CD8-positive, alpha-beta memory T cell (primary cell): ENCODE measurements at regions of chr4 and their contacts with region 1.

Region 1: GRCh38 chr4:169659716-169660670 is 39.6 kb downstream of the CLCN3 start:
- DNase-seq: peak; percentile 12 to 84 (median 70)
- H3K4me3 ChIP-seq: peak overlapping the region; percentile 5
- H3K4me3 Mint-ChIP-seq: peak overlapping the region; percentile 23 to 76 (median 54)
- H3K27ac ChIP-seq: peak overlapping the region; percentile 76
- H3K27ac Mint-ChIP-seq: peak overlapping the region; percentile 73 to 96 (median 84)
- H3K4me1 ChIP-seq: no peaks in the 10 kb centered on the region
- H3K4me1 Mint-ChIP-seq: peaks cover 24 to 50% (median 45%) of the 10 kb centered on the region in 3 donors
- H3K27me3 ChIP-seq: no peaks in the 10 kb centered on the region
- H3K27me3 Mint-ChIP-seq: no peaks in the 10 kb centered on the region

Region 2: DNA sequence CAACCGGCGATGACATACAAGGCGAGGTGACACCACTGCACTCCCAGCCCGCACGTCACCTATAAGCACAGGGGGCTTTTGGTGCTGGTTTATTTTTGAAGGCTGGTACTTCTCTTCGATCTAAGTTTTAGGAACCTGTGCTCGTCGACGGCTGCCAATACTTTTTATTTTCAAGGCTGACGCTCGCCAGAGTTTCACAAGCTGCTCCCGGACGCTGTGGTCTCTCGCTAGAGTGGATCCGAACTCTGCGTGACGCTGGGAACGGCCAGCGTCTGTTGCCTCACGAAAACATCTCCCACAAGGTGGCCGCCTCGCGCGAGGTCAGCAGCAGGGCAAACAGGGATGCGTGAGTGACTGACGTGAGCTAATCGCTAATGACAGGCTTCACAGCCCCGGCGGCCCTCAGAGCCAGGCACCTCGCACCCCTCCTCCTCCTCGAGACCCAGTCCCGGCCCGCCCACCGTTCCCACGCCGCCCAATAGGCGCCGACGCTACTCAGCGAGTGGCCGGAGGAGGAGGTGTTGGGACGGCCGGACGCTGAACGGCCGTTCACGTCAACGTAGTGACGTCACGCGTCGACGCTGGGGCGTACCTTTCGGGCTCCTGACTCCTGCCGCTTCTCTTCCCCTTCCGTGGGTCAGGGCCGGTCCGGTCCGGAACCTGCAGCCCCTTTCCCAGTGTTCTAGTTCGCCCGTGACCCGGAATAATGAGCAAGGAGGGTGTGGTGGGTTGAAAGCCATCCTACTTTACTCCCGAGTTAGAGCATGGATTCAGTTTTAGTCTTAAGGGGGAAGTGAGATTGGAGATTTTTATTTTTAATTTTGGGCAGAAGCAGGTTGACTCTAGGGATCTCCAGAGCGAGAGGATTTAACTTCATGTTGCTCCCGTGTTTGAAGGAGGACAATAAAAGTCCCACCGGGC is 39.8 kb before region 1 on chr4 and contains the start of gene CLCN3:
- CTCF ChIA-PET with region 1: interaction called, 11 read pairs
- POLR2A ChIA-PET with region 1: interaction called, 3 read pairs
- DNase-seq: peak; percentile 80 to 90 (median 86)
- H3K4me3 ChIP-seq: peak within 1 kb of the TSS; percentile 90
- H3K4me3 Mint-ChIP-seq: peak within 1 kb of the TSS; percentile 93 to 100 (median 99)
- H3K27ac ChIP-seq: peak within 1 kb of the TSS; percentile 94
- H3K27ac Mint-ChIP-seq: peak within 1 kb of the TSS; percentile 98 to 100 (median 100)
- H3K4me1 ChIP-seq: peaks cover 38% of the 10 kb centered on the region
- H3K4me1 Mint-ChIP-seq: peaks cover 46 to 66% (median 57%) of the 10 kb centered on the region in 3 donors
- H3K27me3 ChIP-seq: no peaks in the 10 kb centered on the region
- H3K27me3 Mint-ChIP-seq: peaks cover 0 to 4% of the 10 kb centered on the region in 2 donors
- total RNA-seq, gene CLCN3: 23.3 to 24.5 TPM

Region 3: DNA sequence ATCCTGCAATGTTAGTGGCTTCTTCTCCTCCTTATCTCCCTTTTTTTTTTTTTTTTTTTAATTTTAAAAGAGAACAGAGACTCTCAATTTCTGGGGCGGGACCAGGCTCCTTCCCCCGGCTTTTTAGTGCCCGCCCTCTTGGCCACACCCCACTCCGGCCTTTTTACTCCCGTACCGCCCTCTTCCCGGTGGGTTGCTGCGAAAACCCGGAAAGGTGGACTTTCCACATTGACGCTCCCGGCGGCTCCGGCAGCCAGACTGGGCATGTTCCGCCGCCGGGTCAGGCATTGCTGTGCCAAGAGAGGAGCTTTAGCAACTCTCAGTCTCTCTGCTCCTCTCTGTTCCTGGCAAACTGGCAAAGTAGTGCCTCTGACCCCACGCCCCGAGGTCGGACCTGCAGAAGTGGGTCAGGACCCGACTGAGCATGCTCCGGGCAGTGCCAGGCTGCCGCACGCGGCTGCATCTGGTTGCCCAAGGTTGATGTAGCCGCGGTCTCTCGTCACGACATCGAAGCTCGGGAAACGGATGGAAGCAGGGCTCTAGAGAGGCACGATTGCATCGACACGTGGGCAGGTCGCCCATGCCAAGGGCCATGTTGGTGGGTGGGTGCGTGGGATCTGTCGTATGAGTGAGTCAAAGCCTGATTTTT is 367.3 kb after region 1 on chr4:
- CTCF ChIA-PET with region 1: no interaction called
- POLR2A ChIA-PET with region 1: interaction called, 10 read pairs
- DNase-seq: peak; percentile 79 to 91 (median 88)
- H3K4me3 ChIP-seq: peak overlapping the region; percentile 90
- H3K4me3 Mint-ChIP-seq: peak overlapping the region; percentile 91 to 97 (median 92)
- H3K27ac ChIP-seq: peak overlapping the region; percentile 61
- H3K27ac Mint-ChIP-seq: peak overlapping the region; percentile 64 to 93 (median 84)
- H3K4me1 ChIP-seq: peaks cover 4% of the 10 kb centered on the region
- H3K4me1 Mint-ChIP-seq: peaks cover 12 to 20% (median 18%) of the 10 kb centered on the region in 3 donors
- H3K27me3 ChIP-seq: peaks cover 9% of the 10 kb centered on the region
- H3K27me3 Mint-ChIP-seq: peaks cover 11 to 26% of the 10 kb centered on the region in 2 donors